ENCODE measurements at regions of chr17 and their contacts with region 1.

Region 1: GRCh38 chr17:64216338-64217248 is 46.5 kb downstream of the TEX2 start:
- DNase-seq: peak; percentile 48
- H3K4me3 ChIP-seq: no peak overlapping the region
- H3K27ac ChIP-seq: peak overlapping the region; percentile 87 to 91
- H3K4me1 ChIP-seq: peaks cover 48 to 54% of the 10 kb centered on the region in 2 experiments
- H3K27me3 ChIP-seq: no peaks in the 10 kb centered on the region
- CTCF ChIP-seq: peak; percentile 35
- EP300 ChIP-seq: no peak; a peak in 1 of 4 replicates
- RAD21 ChIP-seq: peak; percentile 40

Region 2: GRCh38 chr17:64041912-64042311 is 174.7 kb before region 1 on chr17:
- CTCF ChIA-PET with region 1: no interaction called
- POLR2A ChIA-PET with region 1: no interaction called
- DNase-seq: no peak
- H3K4me3 ChIP-seq: no peak overlapping the region
- H3K27ac ChIP-seq: no peak overlapping the region
- H3K4me1 ChIP-seq: no peaks in the 10 kb centered on the region
- H3K27me3 ChIP-seq: no peaks in the 10 kb centered on the region
- CTCF ChIP-seq: no peak
- EP300 ChIP-seq: no peak
- RAD21 ChIP-seq: no peak

Region 3: DNA sequence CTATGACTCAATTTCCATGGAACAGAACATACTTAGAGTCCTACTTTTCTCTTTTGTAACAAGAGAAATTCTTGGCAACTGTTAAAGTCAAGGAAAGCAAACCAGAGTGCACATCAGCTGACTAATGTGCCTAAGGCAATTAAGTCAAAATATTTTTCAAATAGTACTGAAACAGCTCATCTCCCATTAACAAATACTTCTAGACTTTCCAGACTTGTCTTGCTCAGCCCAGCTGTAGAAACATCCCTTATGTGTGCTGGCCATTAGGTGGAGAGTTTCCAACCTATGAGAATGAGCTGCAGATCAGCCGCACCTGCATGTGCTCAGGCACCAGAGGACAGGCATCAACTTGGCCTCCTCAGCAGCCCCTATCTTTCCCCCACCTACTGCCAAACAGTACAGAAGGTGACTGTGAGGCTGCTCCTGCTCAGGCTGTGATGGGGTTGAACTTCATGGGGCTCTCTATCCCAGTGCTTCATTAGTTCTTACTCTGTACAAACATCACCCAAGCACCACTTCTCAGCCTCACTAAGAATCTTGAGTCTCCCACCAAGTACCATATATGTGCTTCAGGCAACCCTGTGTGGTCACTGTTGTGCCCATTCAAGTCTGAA is 14.3 kb after region 1 on chr17:
- CTCF ChIA-PET with region 1: interaction called, 17 read pairs
- POLR2A ChIA-PET with region 1: no interaction called
- DNase-seq: no peak
- H3K4me3 ChIP-seq: no peak overlapping the region
- H3K27ac ChIP-seq: peak overlapping the region; percentile 95 to 96
- H3K4me1 ChIP-seq: peaks cover 24 to 37% of the 10 kb centered on the region in 2 experiments
- H3K27me3 ChIP-seq: no peaks in the 10 kb centered on the region
- CTCF ChIP-seq: peak; percentile 37
- EP300 ChIP-seq: peak; percentile 72 to 96
- RAD21 ChIP-seq: no peak

Region 4: GRCh38 chr17:64240741-64241347 is 24.3 kb after region 1 on chr17:
- CTCF ChIA-PET with region 1: interaction called, 17 read pairs
- POLR2A ChIA-PET with region 1: interaction called, 6 read pairs
- DNase-seq: peak; percentile 87
- H3K4me3 ChIP-seq: peak overlapping the region; percentile 1 to 45; a peak in 3 of 4 replicates
- H3K27ac ChIP-seq: peak overlapping the region; percentile 79 to 97
- H3K4me1 ChIP-seq: peaks cover 36 to 44% of the 10 kb centered on the region in 2 experiments
- H3K27me3 ChIP-seq: no peaks in the 10 kb centered on the region
- CTCF ChIP-seq: no peak
- EP300 ChIP-seq: peak; percentile 51 to 91; a peak in 3 of 4 replicates
- RAD21 ChIP-seq: peak; percentile 46

Region 5: DNA sequence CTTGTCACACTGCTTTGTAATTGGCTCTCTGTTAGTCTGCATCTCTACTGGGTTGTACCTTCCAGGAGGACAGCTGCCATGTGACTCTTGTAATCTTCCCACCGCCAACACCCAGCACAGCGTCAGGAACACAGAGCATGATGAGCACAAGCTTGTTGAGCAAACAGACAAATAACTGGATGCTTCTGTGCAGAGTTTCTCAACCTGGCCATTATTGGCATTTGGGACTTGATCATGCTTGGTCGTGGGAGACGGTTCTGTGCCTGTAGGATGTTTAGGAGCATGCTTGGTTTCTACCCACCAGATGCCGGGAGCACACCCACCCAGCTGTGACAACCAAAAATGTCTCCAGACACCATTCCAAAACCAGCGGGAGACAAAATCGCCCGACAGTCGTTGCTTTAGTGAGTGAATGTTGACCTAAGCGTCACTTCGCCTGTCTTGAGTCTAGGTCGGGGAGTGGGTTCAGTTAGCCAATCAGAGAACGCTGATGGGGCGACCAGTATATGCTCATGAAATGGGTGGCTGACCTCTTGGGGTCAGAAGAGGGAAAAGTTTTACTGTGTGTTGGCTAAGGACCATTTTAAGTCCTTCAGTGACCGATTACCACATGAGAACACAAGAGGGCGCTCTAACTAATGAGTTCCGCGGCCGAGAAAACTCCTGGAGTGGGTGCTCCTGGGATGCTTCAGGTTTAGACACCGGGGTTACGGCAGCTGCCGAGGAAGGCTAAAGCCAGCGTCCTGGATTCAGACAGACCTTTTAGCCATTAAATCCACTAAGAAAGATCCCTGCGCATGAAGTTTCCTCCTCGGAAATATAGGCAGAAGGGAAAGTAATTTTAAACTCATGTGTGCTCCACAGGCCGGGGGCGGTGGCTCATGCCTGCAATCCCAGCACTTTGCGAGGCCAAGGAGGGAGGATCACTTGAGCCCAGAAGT is 104.3 kb after region 1 on chr17:
- CTCF ChIA-PET with region 1: no interaction called
- POLR2A ChIA-PET with region 1: no interaction called
- DNase-seq: peak; percentile 88
- H3K4me3 ChIP-seq: no peak overlapping the region
- H3K27ac ChIP-seq: no peak overlapping the region
- H3K4me1 ChIP-seq: no peaks in the 10 kb centered on the region
- H3K27me3 ChIP-seq: no peaks in the 10 kb centered on the region
- CTCF ChIP-seq: peak; percentile 97
- EP300 ChIP-seq: no peak
- RAD21 ChIP-seq: peak; percentile 87